Naive thymus-derived CD4-positive, alpha-beta T cell (primary cell): ENCODE measurements at regions of chr12 and their contacts with region 1.

Region 1: DNA sequence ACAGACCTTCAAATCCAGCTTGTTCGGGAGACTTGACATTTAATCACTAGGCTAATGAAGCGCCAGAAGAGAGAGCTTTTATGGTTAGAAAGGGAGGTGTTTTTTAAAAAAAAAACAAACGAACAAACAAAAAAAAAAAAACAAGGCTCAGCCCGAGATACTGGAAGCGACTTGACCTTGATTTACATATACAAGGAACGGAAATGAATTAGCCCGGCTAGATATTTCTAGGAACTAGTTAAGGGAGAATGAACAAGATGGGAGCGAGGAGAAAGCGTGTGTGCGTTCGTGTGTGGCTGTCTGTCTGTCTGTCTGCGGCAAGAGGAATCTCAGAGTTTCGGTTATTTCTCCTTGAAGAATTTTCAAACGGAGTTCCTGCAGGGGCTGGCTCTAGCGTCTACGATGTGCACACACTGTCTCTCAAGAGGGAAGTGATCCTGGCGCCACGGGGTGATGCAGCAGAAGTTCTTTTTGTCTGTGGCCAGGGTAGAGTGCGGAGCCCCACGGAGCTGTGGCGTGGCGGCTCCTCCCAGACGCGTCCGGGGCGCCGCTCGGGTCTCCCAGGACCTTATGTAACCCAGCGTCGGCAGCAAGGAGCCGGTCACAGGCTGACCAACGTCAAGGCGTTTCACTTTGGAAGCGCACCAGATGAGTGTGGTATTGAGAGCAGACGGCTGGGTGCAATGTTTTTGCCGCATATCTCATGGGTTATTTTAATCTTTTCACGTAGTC is 18.8 kb downstream of the SOCS2 start:
- DNase-seq: peak in 8 of 9 donors; percentile 13 to 41 (median 25)
- ATAC-seq: peak; percentile 95
- H3K4me3 ChIP-seq: peak overlapping the region; percentile 61
- H3K4me3 Mint-ChIP-seq: peak overlapping the region; percentile 78 to 93 (median 87)
- H3K27ac ChIP-seq: no peak overlapping the region
- H3K27ac Mint-ChIP-seq: peak overlapping the region in 1 of 9 donors; percentile 75
- H3K4me1 ChIP-seq: peaks cover 0 to 6% of the 10 kb centered on the region in 2 donors
- H3K4me1 Mint-ChIP-seq: peaks cover 14 to 42% (median 17%) of the 10 kb centered on the region in 7 donors
- H3K27me3 ChIP-seq: peaks cover 17 to 29% of the 10 kb centered on the region in 2 donors
- H3K27me3 Mint-ChIP-seq: peaks cover 42 to 58% (median 54%) of the 10 kb centered on the region in 5 donors

Region 2: DNA sequence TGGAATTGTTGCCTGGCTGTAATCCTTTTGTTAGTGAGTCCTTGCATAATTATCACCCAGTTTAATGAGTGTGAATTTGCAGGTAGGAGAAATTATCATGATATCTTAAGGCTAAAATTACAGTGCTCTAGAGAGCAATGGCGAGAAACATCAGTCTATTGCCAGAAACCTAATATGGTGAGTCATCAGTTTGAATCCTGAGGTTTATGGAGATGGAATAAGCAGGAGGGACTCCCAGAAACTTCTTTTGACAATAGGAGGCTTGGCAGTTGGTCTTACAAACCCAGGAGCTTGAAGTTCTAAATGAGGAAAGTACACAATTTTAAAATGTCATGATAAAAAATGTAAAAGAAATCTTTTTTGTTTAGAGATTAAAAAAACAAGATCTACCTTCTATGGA is 54.4 kb after region 1 on chr12:
- CTCF ChIA-PET with region 1: no interaction called
- POLR2A ChIA-PET with region 1: no interaction called
- intact Hi-C with region 1: loop called in 1 of 2 experiments (anchors 5 kb)
- DNase-seq: no peak
- ATAC-seq: no peak
- H3K4me3 ChIP-seq: no peak overlapping the region
- H3K4me3 Mint-ChIP-seq: no peak overlapping the region
- H3K27ac ChIP-seq: no peak overlapping the region
- H3K27ac Mint-ChIP-seq: no peak overlapping the region
- H3K4me1 ChIP-seq: no peaks in the 10 kb centered on the region
- H3K4me1 Mint-ChIP-seq: no peaks in the 10 kb centered on the region
- H3K27me3 ChIP-seq: no peaks in the 10 kb centered on the region
- H3K27me3 Mint-ChIP-seq: peaks cover 0 to 8% (median 3%) of the 10 kb centered on the region in 5 donors